ENCODE measurements at regions of chr20 and their contacts with region 1.

Region 1: DNA sequence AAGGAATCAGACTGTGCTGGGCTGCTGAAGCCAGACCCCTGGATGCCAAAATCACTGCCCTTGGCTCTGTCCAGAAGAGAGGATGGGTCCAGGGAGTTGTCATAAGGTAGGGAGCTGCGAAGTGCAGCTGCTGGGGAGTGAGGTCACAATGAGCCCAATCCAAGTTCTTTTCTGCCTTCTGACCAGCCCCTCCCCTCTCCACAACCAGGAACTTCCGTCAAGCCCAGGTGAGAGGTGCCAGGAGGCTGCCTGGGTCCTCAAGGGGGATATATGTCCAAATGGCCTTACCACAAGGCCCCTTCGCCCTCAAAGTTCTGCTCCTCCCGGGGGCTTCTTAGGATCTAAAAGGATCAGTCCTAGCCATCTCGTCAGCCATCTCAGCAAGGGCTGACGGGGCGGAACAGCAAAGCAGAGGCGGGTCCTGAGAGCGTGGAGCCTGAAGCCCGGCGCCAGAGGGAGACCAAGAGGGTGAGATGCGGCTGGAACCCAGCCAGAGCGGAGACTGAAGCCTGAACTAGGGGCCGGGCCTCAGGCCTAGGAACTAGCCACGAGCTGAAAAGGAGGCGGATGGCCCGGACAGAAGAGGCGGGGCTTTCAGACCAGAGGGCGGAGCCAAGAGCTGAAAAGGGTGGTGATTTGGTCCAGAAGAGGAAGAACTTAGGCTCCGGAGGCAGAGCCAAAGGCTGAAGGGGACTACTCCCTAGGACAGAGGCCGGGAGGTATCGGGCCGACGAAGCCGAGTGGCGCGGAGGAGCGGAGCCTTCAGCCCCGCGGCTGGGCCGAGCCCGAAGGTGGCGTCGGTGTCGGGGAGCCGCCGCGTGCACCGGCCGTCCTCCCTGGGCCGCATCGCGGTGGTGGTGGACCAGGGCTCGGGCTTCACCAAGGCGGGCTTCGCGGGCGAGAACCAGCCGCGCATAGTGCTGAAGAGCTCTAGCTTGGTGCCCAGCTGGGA is at the start of gene ACTL10:
- DNase-seq: peak; percentile 76
- H3K4me3 ChIP-seq: peak within 1 kb of the TSS; percentile 26 to 52 (median 50)
- H3K27ac ChIP-seq: no peak within 1 kb of the TSS
- H3K4me1 ChIP-seq: peaks cover 31% of the 10 kb centered on the region
- H3K27me3 ChIP-seq: no peaks in the 10 kb centered on the region
- CTCF ChIP-seq: peak in 1 of 2 donors; percentile 17
- total RNA-seq, gene ACTL10: 1.4 to 2.7 TPM

Region 2: DNA sequence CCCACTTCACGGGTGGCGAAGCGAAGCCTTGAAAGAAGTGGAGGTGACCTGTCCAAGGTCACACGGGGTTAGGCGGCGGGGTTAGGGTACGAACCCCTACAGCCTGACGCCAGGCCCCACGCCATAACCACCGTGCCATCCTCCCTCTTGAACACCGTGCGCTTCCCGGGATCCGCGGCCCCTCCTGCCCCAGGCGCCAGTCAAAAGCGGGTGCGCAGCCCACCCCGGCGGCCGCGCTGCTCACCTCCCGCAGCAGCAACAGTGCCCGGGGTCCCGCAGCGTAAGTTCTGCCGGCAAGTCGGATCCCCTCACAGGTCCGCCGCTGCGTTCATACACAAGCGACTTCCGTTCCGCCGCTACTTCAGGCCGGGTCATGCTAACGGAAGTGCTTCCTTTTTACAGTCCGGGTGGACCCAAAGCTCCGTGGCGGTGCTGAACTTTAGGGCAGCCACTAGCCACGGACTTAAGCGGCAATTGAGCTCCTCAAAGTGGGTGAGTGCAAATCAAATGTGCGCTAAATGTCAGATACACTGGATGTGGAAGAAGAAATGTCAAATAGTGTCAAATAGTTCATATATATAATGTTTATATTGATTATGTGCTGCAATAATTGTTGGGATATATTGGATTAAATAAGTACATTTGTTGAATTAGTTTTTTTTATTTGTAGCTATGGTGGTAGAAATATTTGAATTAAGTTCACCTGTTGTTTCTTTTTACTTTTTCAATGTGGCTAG is 265.2 kb before region 1 on chr20 and contains the start of gene CDK5RAP1:
- CTCF ChIA-PET with region 1: no interaction called
- dilution Hi-C with region 1: no loop called
- in situ Hi-C with region 1: no loop called
- intact Hi-C with region 1: loop called (anchors 1 kb)
- DNase-seq: peak; percentile 83
- H3K4me3 ChIP-seq: peak within 1 kb of the TSS; percentile 76 to 91 (median 80)
- H3K27ac ChIP-seq: peak within 1 kb of the TSS; percentile 42
- H3K4me1 ChIP-seq: peaks cover 26% of the 10 kb centered on the region
- H3K27me3 ChIP-seq: no peaks in the 10 kb centered on the region
- CTCF ChIP-seq: no peak
- total RNA-seq, gene CDK5RAP1: 20.7 to 35.5 TPM

Region 3: DNA sequence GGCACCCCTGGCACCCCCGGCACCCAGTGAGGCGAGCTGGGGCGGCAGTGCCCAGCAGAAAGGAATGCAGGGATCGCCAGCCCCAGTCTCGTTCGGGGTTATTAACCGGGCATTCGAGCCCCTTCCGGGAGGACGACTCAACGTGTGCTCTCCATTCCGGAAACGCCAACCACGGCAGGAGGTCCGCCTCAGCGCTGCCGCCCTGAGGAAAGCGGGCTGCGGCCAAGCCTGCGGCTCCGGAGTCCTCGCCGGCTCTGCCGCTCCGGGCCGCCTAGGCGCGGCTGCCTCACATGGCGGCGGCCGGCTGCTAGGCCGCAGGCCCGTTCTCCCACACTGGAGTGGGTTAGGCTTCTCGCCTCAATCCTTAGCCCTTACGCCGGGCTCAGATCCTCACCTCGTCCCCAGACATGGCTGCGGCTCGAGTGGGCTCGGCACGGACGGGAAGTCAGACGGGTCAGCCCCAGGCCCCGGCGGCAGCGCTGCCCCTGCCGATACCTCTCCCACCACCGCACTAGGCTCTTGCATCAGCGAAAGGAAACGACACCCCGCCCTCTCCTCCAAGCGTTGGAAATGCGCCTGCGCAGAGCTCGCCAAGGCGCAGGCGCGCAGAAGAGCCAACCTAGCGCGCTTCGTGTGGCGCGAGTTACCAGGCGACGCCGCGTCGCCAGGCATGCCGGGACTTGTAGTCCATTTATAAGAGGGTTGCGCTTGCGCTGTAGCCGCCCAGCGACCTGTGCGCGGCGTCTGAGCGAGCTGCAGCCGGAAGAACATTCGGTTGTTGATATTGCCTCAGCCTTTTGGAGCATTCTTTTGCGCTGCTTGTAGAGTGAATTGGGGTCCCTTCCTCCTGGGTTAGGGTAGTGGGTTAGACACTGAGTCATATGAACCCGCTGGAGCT is 445.4 kb after region 1 on chr20 and contains the start of gene EIF2S2:
- CTCF ChIA-PET with region 1: interaction called, 19 read pairs
- dilution Hi-C with region 1: no loop called
- in situ Hi-C with region 1: no loop called
- intact Hi-C with region 1: no loop called
- DNase-seq: peak; percentile 98
- H3K4me3 ChIP-seq: peak within 1 kb of the TSS; percentile 75 to 96 (median 90)
- H3K27ac ChIP-seq: peak within 1 kb of the TSS; percentile 96
- H3K4me1 ChIP-seq: peaks cover 22% of the 10 kb centered on the region
- H3K27me3 ChIP-seq: no peaks in the 10 kb centered on the region
- CTCF ChIP-seq: no peak
- total RNA-seq, gene EIF2S2: 99.2 to 157 TPM

Region 4: DNA sequence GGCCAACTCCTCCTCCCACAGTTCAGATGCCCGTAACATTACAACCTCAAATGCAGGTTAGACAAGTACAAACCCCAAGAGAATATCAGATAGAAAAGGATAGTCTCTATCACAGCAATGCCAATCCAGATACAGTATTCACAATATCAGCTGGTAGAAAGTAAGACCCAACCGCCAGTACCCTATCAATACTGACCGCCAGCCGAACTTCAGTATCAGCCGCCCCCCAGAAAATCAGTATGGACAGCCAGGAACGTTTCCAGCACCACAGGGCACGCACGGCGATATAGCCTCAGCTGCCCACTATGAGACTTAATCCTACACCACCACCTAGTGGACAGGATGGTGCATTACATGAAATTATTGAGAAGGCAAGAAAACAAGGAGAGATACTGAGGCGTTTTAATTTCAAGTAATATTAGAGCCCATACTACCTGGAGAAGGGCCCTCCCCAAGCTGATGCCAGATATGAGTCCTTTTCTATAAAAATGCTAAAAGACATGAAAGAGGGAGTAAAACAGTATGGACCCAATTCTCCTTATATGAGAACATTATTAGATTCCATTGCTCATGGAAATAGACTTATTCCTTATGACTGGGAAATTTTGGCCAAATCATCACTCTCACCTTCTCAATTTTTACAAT is 463.1 kb after region 1 on chr20:
- CTCF ChIA-PET with region 1: no interaction called
- dilution Hi-C with region 1: no loop called
- in situ Hi-C with region 1: no loop called
- intact Hi-C with region 1: loop called (anchors 2 kb)
- DNase-seq: peak; percentile 64
- H3K4me3 ChIP-seq: no peak overlapping the region
- H3K27ac ChIP-seq: no peak overlapping the region
- H3K4me1 ChIP-seq: peaks cover under 1% of the 10 kb centered on the region
- H3K27me3 ChIP-seq: no peaks in the 10 kb centered on the region
- CTCF ChIP-seq: peak; percentile 83 to 85